CD8-positive, alpha-beta T cell (primary cell): ENCODE measurements at regions of chr2 and their contacts with region 1.

Region 1: DNA sequence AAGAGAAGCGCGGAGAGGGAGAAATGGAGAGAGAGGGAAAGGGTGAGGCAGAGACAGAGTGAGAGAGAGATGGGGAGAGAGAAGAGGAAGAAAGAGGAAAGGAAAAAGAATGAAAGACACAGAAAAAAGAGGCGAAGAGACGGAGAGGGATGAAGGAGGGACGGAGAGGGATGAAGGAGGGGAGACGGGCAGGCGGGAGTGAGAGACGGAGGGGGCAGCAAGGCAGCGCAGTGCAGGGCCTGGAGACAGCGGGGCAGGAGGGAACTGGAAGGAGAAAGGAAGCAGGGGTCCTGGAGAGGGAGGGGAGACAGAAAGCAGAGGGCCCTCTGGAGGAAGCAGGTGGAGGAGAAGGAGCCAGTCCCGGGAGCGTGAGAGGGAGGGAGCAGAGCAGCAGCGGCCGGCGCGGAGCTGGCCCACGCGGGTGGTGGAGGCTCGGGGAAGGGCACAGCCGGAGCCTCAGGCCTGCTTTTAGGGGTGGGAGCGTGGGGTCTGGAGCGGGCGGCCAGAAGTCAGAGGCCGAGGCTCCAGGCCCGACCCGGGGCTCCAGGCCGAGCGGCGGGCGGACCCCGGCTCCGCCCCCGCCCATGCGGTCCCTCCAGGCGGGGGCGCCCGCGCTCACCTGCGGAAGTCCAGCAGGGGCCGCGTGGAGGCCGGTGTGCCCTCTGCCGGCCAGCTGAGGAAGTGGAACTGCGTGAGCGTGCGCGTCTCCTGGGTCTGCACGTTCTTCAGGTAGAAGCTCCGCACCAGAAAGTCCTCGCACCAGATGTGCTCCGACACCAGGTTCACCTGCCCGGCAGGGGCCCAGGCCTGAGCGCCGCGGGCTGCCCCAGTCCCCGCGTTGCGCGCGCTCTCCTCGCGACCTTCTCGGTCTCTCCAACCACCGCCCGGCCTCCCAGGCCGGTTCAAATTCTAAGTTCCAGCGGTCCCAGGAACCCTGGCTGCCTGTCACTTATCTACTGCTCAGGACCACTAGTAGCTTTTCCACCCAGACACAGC is 14.5 kb downstream of the PTPRN start:
- DNase-seq: peak; percentile 79 to 94 (median 87)
- ATAC-seq: peak; percentile 94
- H3K4me3 ChIP-seq: peak overlapping the region; percentile 49
- H3K4me3 Mint-ChIP-seq: peak overlapping the region; percentile 72
- H3K27ac ChIP-seq: peak overlapping the region; percentile 14 to 59
- H3K27ac Mint-ChIP-seq: peak overlapping the region; percentile 86
- H3K4me1 ChIP-seq: peaks cover 39% of the 10 kb centered on the region
- H3K4me1 Mint-ChIP-seq: peaks cover 37% of the 10 kb centered on the region
- H3K27me3 ChIP-seq: peaks cover 0 to 2% of the 10 kb centered on the region in 2 experiments
- H3K27me3 Mint-ChIP-seq: peaks cover 2% of the 10 kb centered on the region
- CTCF ChIP-seq: peak; percentile 98

Region 2: GRCh38 chr2:218995972-218996711 is 298.5 kb before region 1 on chr2:
- CTCF ChIA-PET with region 1: no interaction called
- POLR2A ChIA-PET with region 1: no interaction called
- intact Hi-C with region 1: no loop called
- DNase-seq: peak; percentile 58 to 83 (median 78)
- ATAC-seq: peak; percentile 80
- H3K4me3 ChIP-seq: peak overlapping the region in 1 of 2 experiments; percentile 34
- H3K4me3 Mint-ChIP-seq: peak overlapping the region; percentile 22
- H3K27ac ChIP-seq: no peak overlapping the region
- H3K27ac Mint-ChIP-seq: no peak overlapping the region
- H3K4me1 ChIP-seq: peaks cover 17% of the 10 kb centered on the region
- H3K4me1 Mint-ChIP-seq: peaks cover 9% of the 10 kb centered on the region
- H3K27me3 ChIP-seq: peaks cover 29 to 39% of the 10 kb centered on the region in 2 experiments
- H3K27me3 Mint-ChIP-seq: peaks cover 67% of the 10 kb centered on the region
- CTCF ChIP-seq: peak; percentile 75

Region 3: DNA sequence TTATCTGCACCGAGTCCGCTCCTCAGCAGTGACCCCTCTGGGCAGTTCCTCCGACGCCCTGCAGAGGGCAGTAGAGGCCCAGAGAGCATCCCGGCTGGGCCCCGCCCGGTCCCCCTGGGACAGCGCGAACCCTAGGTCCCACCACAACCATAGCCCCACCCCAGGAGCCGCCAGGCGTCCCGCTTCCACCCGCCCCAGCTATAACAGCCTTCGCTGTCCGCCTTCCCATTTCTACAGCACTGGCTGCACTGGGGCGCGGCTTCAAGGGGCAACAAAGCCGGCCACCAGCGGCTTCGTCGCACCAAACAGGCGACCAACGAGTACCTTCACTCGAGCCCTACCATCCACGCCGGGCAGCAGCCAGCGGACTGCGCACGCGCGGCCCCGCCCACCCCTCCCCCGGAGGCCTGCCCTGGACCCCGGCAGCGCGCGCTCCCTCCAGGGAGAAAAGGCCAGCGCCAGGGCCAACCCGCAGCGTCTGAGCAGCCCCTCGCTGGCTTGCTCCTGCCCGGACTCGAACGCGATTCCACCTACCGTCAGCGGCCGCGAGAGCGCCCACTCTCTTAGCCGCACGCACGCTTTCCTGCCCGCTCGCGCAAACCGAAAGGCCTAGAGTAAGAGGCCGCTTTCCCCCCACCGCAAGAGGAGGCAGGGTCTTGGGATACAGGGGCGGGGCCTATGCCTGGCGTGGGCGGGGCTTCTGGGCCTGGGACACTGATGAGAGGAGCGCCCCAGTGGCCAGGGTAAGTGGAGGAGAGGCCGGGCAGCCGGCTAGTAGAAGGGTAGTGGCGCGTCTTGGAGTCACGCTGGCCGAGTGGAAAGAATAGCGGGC is 134.3 kb before region 1 on chr2 and contains the start of gene NHEJ1:
- CTCF ChIA-PET with region 1: interaction called, 101 read pairs
- POLR2A ChIA-PET with region 1: interaction called, 13 read pairs
- intact Hi-C with region 1: loop called (anchors 1 kb)
- DNase-seq: peak; percentile 83 to 97 (median 92)
- ATAC-seq: peak; percentile 88
- H3K4me3 ChIP-seq: peak within 1 kb of the TSS; percentile 59 to 77
- H3K4me3 Mint-ChIP-seq: peak within 1 kb of the TSS; percentile 93
- H3K27ac ChIP-seq: peak within 1 kb of the TSS; percentile 60 to 69
- H3K27ac Mint-ChIP-seq: peak within 1 kb of the TSS; percentile 95
- H3K4me1 ChIP-seq: peaks cover 11% of the 10 kb centered on the region
- H3K4me1 Mint-ChIP-seq: peaks cover 16% of the 10 kb centered on the region
- H3K27me3 ChIP-seq: no peaks in the 10 kb centered on the region
- H3K27me3 Mint-ChIP-seq: no peaks in the 10 kb centered on the region
- CTCF ChIP-seq: peak; percentile 97
- total RNA-seq, gene NHEJ1: 7.2 to 8.1 TPM

Region 4: GRCh38 chr2:219206442-219207253 is 88.0 kb before region 1 on chr2 and contains the start of gene ZFAND2B:
- CTCF ChIA-PET with region 1: interaction called, 15 read pairs
- POLR2A ChIA-PET with region 1: interaction called, 3 read pairs
- intact Hi-C with region 1: loop called in 1 of 2 experiments (anchors 1 kb)
- DNase-seq: peak; percentile 91 to 99 (median 96)
- ATAC-seq: peak; percentile 88
- H3K4me3 ChIP-seq: peak within 1 kb of the TSS; percentile 63 to 68
- H3K4me3 Mint-ChIP-seq: peak within 1 kb of the TSS; percentile 95
- H3K27ac ChIP-seq: peak within 1 kb of the TSS; percentile 87 to 88
- H3K27ac Mint-ChIP-seq: peak within 1 kb of the TSS; percentile 99
- H3K4me1 ChIP-seq: peaks cover 48% of the 10 kb centered on the region
- H3K4me1 Mint-ChIP-seq: peaks cover 46% of the 10 kb centered on the region
- H3K27me3 ChIP-seq: no peaks in the 10 kb centered on the region
- H3K27me3 Mint-ChIP-seq: no peaks in the 10 kb centered on the region
- CTCF ChIP-seq: no peak
- total RNA-seq, gene ZFAND2B: 74.3 to 78.7 TPM

Region 5: GRCh38 chr2:219245148-219245898 is 49.3 kb before region 1 on chr2 and contains the starts of genes GLB1L and STK16:
- CTCF ChIA-PET with region 1: interaction called, 26 read pairs
- POLR2A ChIA-PET with region 1: interaction called, 3 read pairs
- intact Hi-C with region 1: loop called in 1 of 2 experiments (anchors 2 kb)
- DNase-seq: peak; percentile 67 to 94 (median 87)
- ATAC-seq: peak; percentile 37
- H3K4me3 ChIP-seq: peak within 1 kb of the TSS; percentile 68 to 94
- H3K4me3 Mint-ChIP-seq: peak within 1 kb of the TSS; percentile 94
- H3K27ac ChIP-seq: peak within 1 kb of the TSS; percentile 89 to 96
- H3K27ac Mint-ChIP-seq: peak within 1 kb of the TSS; percentile 99
- H3K4me1 ChIP-seq: peaks cover 58% of the 10 kb centered on the region
- H3K4me1 Mint-ChIP-seq: peaks cover 68% of the 10 kb centered on the region
- H3K27me3 ChIP-seq: no peaks in the 10 kb centered on the region
- H3K27me3 Mint-ChIP-seq: no peaks in the 10 kb centered on the region
- CTCF ChIP-seq: no peak
- total RNA-seq, gene GLB1L: 1.7 to 2.8 TPM
- total RNA-seq, gene STK16: 12.9 to 13.2 TPM

Region 6: DNA sequence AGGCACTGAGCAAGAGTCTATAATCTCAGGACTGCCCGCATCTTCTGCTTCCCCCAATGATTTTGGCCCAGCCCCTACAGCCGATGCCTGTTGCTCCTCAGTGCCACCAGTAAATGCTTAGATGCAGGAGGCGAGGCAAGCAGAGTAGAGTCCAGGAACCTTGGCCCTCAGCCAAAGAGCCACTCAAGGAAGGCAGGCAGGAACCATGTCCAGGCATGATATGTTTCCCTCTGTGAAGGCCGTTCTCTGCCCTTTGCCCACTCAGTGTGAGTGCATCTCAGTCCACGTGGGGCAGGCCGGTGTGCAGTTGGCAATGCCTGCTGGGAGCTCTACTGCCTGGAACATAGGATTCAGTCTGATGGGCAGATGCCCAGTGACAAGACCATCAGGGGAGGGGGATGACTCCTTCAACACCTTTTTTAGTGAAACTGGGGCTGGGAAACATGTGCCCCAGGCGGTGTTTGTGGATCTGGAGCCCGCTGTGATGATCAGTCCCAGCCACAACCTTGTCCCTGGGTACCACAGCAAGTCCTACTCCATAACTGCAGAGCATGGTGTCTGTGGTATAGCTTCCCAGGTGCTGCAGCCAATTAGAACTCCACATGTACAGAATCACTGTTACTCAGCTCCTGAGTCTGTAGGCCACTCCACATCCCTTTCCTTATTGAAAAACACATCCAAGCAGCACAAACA is 25.1 kb before region 1 on chr2:
- CTCF ChIA-PET with region 1: interaction called, 269 read pairs
- POLR2A ChIA-PET with region 1: no interaction called
- intact Hi-C with region 1: no loop called
- DNase-seq: no peak
- ATAC-seq: no peak
- H3K4me3 ChIP-seq: no peak overlapping the region
- H3K4me3 Mint-ChIP-seq: no peak overlapping the region
- H3K27ac ChIP-seq: no peak overlapping the region
- H3K27ac Mint-ChIP-seq: no peak overlapping the region
- H3K4me1 ChIP-seq: no peaks in the 10 kb centered on the region
- H3K4me1 Mint-ChIP-seq: no peaks in the 10 kb centered on the region
- H3K27me3 ChIP-seq: no peaks in the 10 kb centered on the region
- H3K27me3 Mint-ChIP-seq: no peaks in the 10 kb centered on the region
- CTCF ChIP-seq: no peak

Region 7: DNA sequence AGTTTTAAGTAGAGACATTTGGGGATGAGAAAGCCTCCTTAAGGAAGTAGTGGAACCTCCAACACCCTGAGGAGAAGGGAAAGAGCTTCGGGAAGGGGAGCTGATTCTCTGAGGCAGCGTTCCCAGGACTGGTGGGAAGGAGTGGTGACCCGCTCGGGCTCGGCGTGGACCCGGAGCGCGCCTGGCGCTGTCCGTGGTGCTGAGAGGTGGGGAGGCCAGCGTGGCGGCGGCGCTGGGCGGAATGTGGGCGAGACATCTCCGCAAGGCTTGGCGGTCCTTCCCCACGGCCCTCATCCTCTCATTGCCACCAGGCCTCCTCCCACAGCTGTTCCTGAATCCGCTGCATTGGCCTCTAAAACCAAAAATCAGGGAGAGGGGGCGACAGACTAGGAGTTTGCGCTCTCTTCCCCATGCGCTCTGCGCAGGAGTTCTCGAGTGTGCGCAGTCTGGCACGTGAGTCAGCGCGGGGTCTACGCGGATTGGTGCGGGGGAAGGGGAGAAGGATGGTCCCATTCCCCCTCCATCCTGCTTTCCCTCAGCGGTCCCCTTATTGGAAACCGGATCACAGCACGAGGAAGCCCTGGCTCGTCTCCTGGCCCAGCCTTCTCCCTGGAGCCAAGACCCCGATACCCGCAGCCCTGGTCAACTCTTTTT is 37.0 kb after region 1 on chr2:
- CTCF ChIA-PET with region 1: no interaction called
- POLR2A ChIA-PET with region 1: no interaction called
- intact Hi-C with region 1: no loop called
- DNase-seq: peak in 4 of 9 experiments; percentile 12 to 34 (median 28)
- ATAC-seq: no peak
- H3K4me3 ChIP-seq: no peak overlapping the region
- H3K4me3 Mint-ChIP-seq: no peak overlapping the region
- H3K27ac ChIP-seq: no peak overlapping the region
- H3K27ac Mint-ChIP-seq: no peak overlapping the region
- H3K4me1 ChIP-seq: no peaks in the 10 kb centered on the region
- H3K4me1 Mint-ChIP-seq: no peaks in the 10 kb centered on the region
- H3K27me3 ChIP-seq: peaks cover 18 to 20% of the 10 kb centered on the region in 2 experiments
- H3K27me3 Mint-ChIP-seq: peaks cover 62% of the 10 kb centered on the region
- CTCF ChIP-seq: no peak

Region 8: GRCh38 chr2:219543601-219544358 is 249.1 kb after region 1 on chr2 and contains the starts of genes CHPF and TMEM198:
- CTCF ChIA-PET with region 1: no interaction called
- POLR2A ChIA-PET with region 1: no interaction called
- intact Hi-C with region 1: loop called in 1 of 2 experiments (anchors 5 kb)
- DNase-seq: peak; percentile 82 to 95 (median 90)
- ATAC-seq: peak; percentile 69
- H3K4me3 ChIP-seq: peak within 1 kb of the TSS; percentile 66 to 80
- H3K4me3 Mint-ChIP-seq: peak within 1 kb of the TSS; percentile 87
- H3K27ac ChIP-seq: peak within 1 kb of the TSS; percentile 61 to 73
- H3K27ac Mint-ChIP-seq: peak within 1 kb of the TSS; percentile 84
- H3K4me1 ChIP-seq: peaks cover 18% of the 10 kb centered on the region
- H3K4me1 Mint-ChIP-seq: peaks cover 25% of the 10 kb centered on the region
- H3K27me3 ChIP-seq: no peaks in the 10 kb centered on the region
- H3K27me3 Mint-ChIP-seq: peaks cover 12% of the 10 kb centered on the region
- CTCF ChIP-seq: no peak
- total RNA-seq, gene CHPF: 5.2 to 6.2 TPM
- total RNA-seq, gene TMEM198: 0.31 to 0.46 TPM